Right ventricle myocardium inferior (tissue), 1 donor: ENCODE measurements at regions of chr2 and their contacts with region 1.

Region 1: DNA sequence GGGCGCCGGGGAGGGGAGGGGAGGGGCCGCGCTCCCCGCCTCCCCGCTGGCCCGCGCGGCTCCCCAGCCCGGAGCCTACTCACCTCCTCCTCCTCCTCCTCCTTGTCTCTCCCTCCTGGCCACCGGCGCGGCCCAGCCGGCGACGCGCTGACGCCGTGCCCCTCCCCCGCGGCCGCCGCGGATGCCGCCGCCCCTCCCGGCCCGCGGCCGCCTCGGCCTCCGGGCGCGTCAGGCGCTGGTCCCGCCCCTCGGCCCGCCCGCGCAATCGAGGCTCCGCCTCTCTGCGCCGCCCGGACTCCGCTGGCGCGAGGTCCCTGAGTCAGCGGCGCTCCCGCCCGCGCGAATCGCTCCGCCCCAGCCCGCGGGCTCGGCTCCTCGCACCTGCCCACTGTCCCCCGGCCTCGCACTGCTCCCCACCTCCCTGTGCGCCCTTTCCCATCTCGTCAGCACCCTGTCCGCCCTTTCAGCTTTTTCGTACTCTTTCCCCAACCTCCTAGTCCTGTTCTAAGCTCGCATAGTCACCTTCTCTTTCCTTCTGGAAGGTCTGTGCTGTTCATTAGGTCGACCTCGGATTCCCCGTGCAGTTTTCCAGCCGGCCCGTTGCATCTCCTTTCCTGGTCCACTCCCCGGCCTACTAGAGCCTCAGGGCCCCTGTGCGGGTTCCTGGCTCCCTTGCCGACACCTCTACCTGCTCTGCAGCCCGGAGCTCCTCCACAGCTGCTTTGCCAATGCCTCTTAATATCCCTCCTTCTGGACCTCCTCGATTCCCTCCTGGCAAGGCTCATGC is 187.4 kb downstream of the ZEB2 start:
- DNase-seq: peak; percentile 93
- ATAC-seq: peak; percentile 96

Region 2: GRCh38 chr2:144215701-144216675 is 116.6 kb before region 1 on chr2:
- intact Hi-C with region 1: loop called (anchors 5 kb)
- DNase-seq: no peak
- ATAC-seq: no peak

Region 3: GRCh38 chr2:144374163-144374661 is 41.7 kb after region 1 on chr2:
- intact Hi-C with region 1: no loop called
- DNase-seq: no peak
- ATAC-seq: no peak

Region 4: DNA sequence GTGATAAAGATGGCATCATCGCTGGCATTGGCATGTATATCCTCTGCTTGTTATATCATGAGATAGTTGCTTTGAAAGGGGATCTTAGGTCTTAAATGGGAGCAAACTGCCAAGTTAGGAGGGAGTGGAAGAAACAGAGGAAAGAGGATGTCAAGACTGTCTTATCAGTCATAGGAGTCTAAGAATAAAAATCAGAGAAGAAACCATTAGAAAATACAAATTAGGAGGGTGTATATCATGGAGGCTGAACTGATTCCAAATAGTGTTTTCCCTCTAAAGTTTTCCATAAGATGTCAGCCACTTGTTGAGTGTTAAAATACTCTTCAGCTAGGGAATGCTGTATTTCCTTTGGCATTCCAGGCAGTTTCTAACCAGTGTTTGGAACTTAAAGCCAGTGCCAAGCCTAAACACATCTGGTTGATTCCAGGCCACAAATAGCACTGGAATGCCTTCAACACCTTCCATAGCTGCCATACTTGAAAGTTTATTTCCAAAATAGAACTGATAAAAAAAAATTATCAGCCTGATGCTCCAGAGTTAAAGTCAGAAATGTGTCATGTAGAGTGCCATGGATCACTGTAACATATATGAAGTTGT is 58.0 kb after region 1 on chr2:
- intact Hi-C with region 1: loop called (anchors 5 kb)
- DNase-seq: no peak
- ATAC-seq: peak; percentile 79

Region 5: DNA sequence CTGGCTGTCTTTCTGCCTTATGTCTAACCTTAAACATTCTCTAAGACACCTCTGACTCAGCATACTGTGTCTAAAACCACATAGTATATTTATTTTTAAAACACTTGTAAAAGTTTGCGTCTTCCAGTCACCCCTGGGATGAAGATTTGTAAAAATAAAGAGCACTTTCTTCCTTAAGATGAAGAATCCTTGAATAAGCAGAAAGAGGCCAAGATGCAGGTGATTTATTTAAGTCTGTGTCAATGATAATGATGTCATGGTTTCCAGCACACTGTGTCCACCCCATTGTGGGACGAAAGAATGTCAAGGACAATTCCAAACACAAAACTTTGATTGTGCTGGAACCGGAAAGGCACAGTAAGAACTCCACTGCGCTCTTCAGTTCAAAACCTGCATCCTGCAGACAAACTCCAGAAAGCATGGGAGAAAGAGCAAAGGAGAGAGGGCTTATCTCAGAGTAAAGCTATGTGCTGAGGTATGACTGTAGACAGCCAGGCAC is 94.5 kb after region 1 on chr2:
- intact Hi-C with region 1: loop called (anchors 5 kb)
- DNase-seq: no peak
- ATAC-seq: peak; percentile 61

Region 6: DNA sequence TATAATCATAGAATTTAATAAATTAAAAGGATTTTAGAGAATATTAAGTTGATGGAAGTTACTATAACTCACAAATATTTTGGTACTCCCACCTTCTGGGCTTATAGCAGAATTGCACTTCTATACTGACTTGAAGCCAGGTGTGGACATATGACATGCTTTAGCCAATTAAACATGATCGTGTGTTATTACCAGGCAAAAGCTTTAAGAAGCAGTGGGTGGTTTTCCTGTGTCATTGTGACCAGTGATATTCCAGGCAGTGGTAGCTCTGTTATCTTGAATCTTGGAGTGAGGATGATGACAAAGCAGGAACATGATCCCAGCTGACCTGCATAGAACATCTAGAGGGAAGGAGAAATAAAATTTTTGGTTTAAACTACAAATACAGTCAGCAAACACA is 558.3 kb after region 1 on chr2:
- intact Hi-C with region 1: loop called (anchors 5 kb)
- DNase-seq: no peak
- ATAC-seq: peak; percentile 33